Caco-2 (cell line): ENCODE measurements at regions of chr17 and their contacts with region 1.

Region 1: GRCh38 chr17:77494664-77495435 is 354.1 kb downstream of the SEC14L1 start:
- DNase-seq: peak; percentile 79 to 88
- H3K4me3 ChIP-seq: no peak overlapping the region
- H3K4me3 Mint-ChIP-seq: no peak overlapping the region
- H3K27ac Mint-ChIP-seq: peak overlapping the region; percentile 83
- H3K4me1 ChIP-seq: no peaks in the 10 kb centered on the region
- H3K4me1 Mint-ChIP-seq: peaks cover 7% of the 10 kb centered on the region
- H3K27me3 ChIP-seq: no peaks in the 10 kb centered on the region
- H3K27me3 Mint-ChIP-seq: no peaks in the 10 kb centered on the region
- CTCF ChIP-seq: peak; percentile 94 to 96

Region 2: GRCh38 chr17:77254951-77255825 is 239.7 kb before region 1 on chr17:
- CTCF ChIA-PET with region 1: no interaction called
- POLR2A ChIA-PET with region 1: no interaction called
- intact Hi-C with region 1: loop called (anchors 10 kb)
- DNase-seq: peak; percentile 64 to 82
- H3K4me3 ChIP-seq: no peak overlapping the region
- H3K4me3 Mint-ChIP-seq: peak overlapping the region; percentile 33
- H3K27ac Mint-ChIP-seq: peak overlapping the region; percentile 91
- H3K4me1 ChIP-seq: peaks cover 22% of the 10 kb centered on the region
- H3K4me1 Mint-ChIP-seq: peaks cover 17% of the 10 kb centered on the region
- H3K27me3 ChIP-seq: no peaks in the 10 kb centered on the region
- H3K27me3 Mint-ChIP-seq: no peaks in the 10 kb centered on the region
- CTCF ChIP-seq: no peak

Region 3: DNA sequence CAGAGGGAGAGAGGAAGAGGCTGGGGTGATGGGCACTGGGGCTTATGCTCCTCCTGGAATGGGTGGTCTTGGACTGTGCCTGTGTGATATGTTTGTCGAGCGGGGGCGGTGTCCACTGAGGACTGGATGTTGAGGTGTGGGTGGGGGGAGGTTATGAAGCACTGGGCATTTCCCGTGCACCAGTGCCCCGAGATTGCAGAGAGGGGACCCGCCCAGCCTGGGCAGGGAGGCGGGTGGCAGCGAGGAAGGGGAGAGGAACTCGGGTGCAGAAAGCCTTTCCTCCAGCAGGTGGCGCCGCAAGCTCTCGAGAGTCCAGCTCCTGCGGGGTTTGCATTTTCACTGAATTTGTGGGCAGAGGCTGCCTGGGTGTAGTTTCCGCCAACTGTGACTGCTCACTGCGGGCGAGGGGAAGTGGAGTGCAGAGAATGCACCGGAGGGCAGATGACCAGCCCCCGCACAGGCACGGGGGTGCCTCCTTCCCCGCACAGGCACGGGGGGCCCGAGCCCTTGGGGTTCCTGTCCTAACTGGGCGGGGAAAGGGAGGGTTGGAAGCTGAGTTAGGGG is 163.5 kb before region 1 on chr17:
- CTCF ChIA-PET with region 1: no interaction called
- POLR2A ChIA-PET with region 1: no interaction called
- intact Hi-C with region 1: loop called (anchors 1 kb)
- DNase-seq: peak; percentile 83 to 89
- H3K4me3 ChIP-seq: no peak overlapping the region
- H3K4me3 Mint-ChIP-seq: peak overlapping the region; percentile 41
- H3K27ac Mint-ChIP-seq: peak overlapping the region; percentile 56
- H3K4me1 ChIP-seq: peaks cover 15% of the 10 kb centered on the region
- H3K4me1 Mint-ChIP-seq: peaks cover 34% of the 10 kb centered on the region
- H3K27me3 ChIP-seq: no peaks in the 10 kb centered on the region
- H3K27me3 Mint-ChIP-seq: no peaks in the 10 kb centered on the region
- CTCF ChIP-seq: peak; percentile 91 to 94

Region 4: GRCh38 chr17:77451245-77451893 is 43.5 kb before region 1 on chr17:
- CTCF ChIA-PET with region 1: interaction called, 13 read pairs
- POLR2A ChIA-PET with region 1: no interaction called
- intact Hi-C with region 1: loop called (anchors 1 kb)
- DNase-seq: peak; percentile 91
- H3K4me3 ChIP-seq: peak overlapping the region; percentile 77
- H3K4me3 Mint-ChIP-seq: peak overlapping the region; percentile 88
- H3K27ac Mint-ChIP-seq: peak overlapping the region; percentile 95
- H3K4me1 ChIP-seq: peaks cover 39% of the 10 kb centered on the region
- H3K4me1 Mint-ChIP-seq: peaks cover 43% of the 10 kb centered on the region
- H3K27me3 ChIP-seq: no peaks in the 10 kb centered on the region
- H3K27me3 Mint-ChIP-seq: no peaks in the 10 kb centered on the region
- CTCF ChIP-seq: no peak

Region 5: DNA sequence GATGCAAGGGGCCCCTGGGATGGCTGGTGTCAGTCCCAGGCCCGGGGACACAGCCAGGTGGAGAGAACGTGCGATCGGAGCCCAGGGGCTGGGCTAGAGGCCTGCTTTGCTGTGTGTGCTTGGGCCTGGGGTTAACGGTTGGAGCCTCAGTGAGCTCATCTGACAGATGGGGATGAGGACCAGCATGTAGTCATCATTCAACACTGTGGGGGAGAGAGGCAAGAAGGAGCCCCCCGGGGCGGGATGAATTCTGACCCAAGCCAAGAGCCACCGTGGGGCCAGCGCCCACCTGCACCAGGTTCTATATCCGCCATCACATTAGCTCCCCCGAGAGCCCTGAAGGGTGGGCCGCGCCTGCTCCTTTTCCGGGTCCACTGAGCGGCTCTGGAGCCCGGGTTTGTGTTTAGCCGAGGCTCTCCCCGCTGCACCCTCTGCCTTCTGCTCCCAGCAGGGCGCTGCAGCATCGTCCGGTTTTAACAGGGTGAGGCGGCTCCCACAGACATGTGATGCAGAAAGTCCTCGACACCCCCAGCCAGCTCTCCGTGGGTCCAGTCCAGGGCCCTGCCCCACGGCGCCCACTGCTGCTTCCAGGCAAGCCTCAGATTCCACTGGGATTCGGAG is 11.6 kb after region 1 on chr17:
- CTCF ChIA-PET with region 1: interaction called, 15 read pairs
- POLR2A ChIA-PET with region 1: no interaction called
- intact Hi-C with region 1: no loop called
- DNase-seq: no peak
- H3K4me3 ChIP-seq: no peak overlapping the region
- H3K4me3 Mint-ChIP-seq: no peak overlapping the region
- H3K27ac Mint-ChIP-seq: no peak overlapping the region
- H3K4me1 ChIP-seq: no peaks in the 10 kb centered on the region
- H3K4me1 Mint-ChIP-seq: no peaks in the 10 kb centered on the region
- H3K27me3 ChIP-seq: no peaks in the 10 kb centered on the region
- H3K27me3 Mint-ChIP-seq: no peaks in the 10 kb centered on the region
- CTCF ChIP-seq: no peak